ENCODE measurements at regions of chr6 and their contacts with region 1.

Region 1: GRCh38 chr6:4055420-4056041 is 23.4 kb downstream of the FAM217A start:
- DNase-seq: peak; percentile 37 to 70 (median 50)
- ATAC-seq: peak; percentile 84
- H3K4me3 ChIP-seq: no peak overlapping the region
- H3K27ac ChIP-seq: no peak overlapping the region
- H3K4me1 ChIP-seq: peaks cover 0 to 6% of the 10 kb centered on the region in 2 experiments; a peak in 1 of 5 replicates
- H3K27me3 ChIP-seq: no peaks in the 10 kb centered on the region
- CTCF ChIP-seq: peak; percentile 48 to 77 (median 48); a peak in 3 of 6 replicates
- EP300 ChIP-seq: peak; percentile 3; the same call in 1 of the 2 replicates
- POLR2A ChIP-seq: no peak
- RAD21 ChIP-seq: peak; percentile 78 to 83

Region 2: DNA sequence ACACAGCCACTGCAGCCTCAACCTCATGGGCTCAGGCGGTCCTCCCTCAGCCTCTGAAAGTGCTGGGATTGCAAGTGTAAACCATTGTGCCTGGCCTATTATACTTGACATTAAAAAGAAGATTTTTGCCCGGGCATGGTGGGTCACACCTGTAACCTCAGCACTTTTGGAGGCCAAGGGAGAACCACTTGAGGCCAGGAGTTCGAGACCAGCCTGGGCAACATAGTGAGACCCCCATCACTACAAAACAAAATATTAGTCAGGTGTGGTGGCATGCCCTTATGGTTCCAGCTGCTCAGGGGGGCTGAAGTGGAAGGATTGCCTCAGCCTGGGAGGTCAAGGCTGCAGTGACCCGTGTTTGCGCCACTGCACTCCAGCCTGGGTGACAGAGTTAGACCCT is 18.9 kb before region 1 on chr6:
- CTCF ChIA-PET with region 1: no interaction called
- POLR2A ChIA-PET with region 1: interaction called, 10 read pairs
- in situ Hi-C with region 1: no loop called
- intact Hi-C with region 1: no loop called
- DNase-seq: no peak
- ATAC-seq: peak; percentile 33; the same call in 2 of the 3 replicates
- H3K4me3 ChIP-seq: no peak overlapping the region
- H3K27ac ChIP-seq: no peak overlapping the region
- H3K4me1 ChIP-seq: peaks cover 0 to 5% of the 10 kb centered on the region in 2 experiments; a peak in 1 of 5 replicates
- H3K27me3 ChIP-seq: no peaks in the 10 kb centered on the region
- CTCF ChIP-seq: no peak
- EP300 ChIP-seq: no peak
- POLR2A ChIP-seq: no peak
- RAD21 ChIP-seq: no peak

Region 3: GRCh38 chr6:4135665-4136353 is 80.3 kb after region 1 on chr6:
- CTCF ChIA-PET with region 1: no interaction called
- POLR2A ChIA-PET with region 1: interaction called, 5 read pairs
- in situ Hi-C with region 1: no loop called
- intact Hi-C with region 1: loop called (anchors 5 kb)
- DNase-seq: peak; percentile 98 to 99 (median 99)
- ATAC-seq: peak; percentile 88
- H3K4me3 ChIP-seq: peak overlapping the region; percentile 49
- H3K27ac ChIP-seq: peak overlapping the region; percentile 47
- H3K4me1 ChIP-seq: peaks cover 9 to 14% of the 10 kb centered on the region in 2 experiments
- H3K27me3 ChIP-seq: no peaks in the 10 kb centered on the region
- CTCF ChIP-seq: peak in 2 of 3 experiments; percentile 15 to 16; a peak in 2 of 6 replicates
- EP300 ChIP-seq: no peak
- POLR2A ChIP-seq: peak; percentile 57
- RAD21 ChIP-seq: 0 out of 4 replicates have a peak, but pooled peaks of 1 of the 2 experiments have one; percentile 13

Region 4: DNA sequence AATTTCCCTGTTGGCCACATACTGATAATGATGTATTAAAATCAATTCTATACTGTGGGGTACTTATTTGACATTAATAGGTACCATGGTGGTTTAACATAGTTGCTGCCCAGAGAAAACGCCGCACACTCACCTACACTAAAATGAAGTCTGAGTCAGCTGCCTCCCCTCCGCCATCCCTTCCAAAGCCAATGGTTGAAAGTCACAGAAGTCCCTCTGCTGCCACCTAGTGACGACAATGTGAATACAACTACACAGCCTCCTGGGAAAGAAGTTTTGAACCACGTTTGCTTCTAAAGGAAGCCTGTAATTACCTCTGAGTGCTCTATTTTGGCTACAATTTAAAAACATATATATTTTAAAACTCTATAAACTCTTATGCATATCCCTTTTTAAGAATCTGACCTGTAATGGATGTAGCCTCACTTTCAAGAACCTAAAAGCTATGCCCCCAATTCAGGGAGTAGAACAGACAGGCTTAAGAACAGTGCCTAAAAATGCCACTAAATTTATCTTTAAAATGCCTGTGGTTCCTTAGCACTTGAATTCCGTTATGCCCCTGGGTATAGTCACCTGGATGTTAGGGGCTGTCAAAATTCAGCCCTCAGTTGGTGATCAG is 100.4 kb after region 1 on chr6:
- CTCF ChIA-PET with region 1: interaction called, 23 read pairs
- POLR2A ChIA-PET with region 1: no interaction called
- in situ Hi-C with region 1: no loop called
- intact Hi-C with region 1: loop called (anchors 1 kb)
- DNase-seq: peak; percentile 82 to 92 (median 85)
- ATAC-seq: peak; percentile 96
- H3K4me3 ChIP-seq: no peak overlapping the region
- H3K27ac ChIP-seq: no peak overlapping the region
- H3K4me1 ChIP-seq: peaks cover 0 to 2% of the 10 kb centered on the region in 2 experiments; a peak in 1 of 5 replicates
- H3K27me3 ChIP-seq: peaks cover 22 to 41% of the 10 kb centered on the region in 2 experiments; a peak in 4 of 5 replicates
- CTCF ChIP-seq: peak; percentile 86 to 94 (median 90)
- EP300 ChIP-seq: no peak
- POLR2A ChIP-seq: no peak
- RAD21 ChIP-seq: peak; percentile 91 to 95

Region 5: GRCh38 chr6:4210629-4211423 is 155.3 kb after region 1 on chr6:
- CTCF ChIA-PET with region 1: interaction called, 3 read pairs
- POLR2A ChIA-PET with region 1: no interaction called
- in situ Hi-C with region 1: no loop called
- intact Hi-C with region 1: loop called (anchors 1 kb)
- DNase-seq: peak; percentile 65 to 72 (median 68)
- ATAC-seq: peak; percentile 97
- H3K4me3 ChIP-seq: no peak overlapping the region
- H3K27ac ChIP-seq: no peak overlapping the region
- H3K4me1 ChIP-seq: no peaks in the 10 kb centered on the region
- H3K27me3 ChIP-seq: peaks cover 0 to under 1% of the 10 kb centered on the region in 2 experiments; a peak in 1 of 5 replicates
- CTCF ChIP-seq: peak; percentile 73 to 92 (median 85)
- EP300 ChIP-seq: no peak
- POLR2A ChIP-seq: no peak
- RAD21 ChIP-seq: peak; percentile 74 to 90

Measured in K562 (cell line).